GM12878 (cell line): ENCODE measurements at regions of chr12 and their contacts with region 1.

Region 1: DNA sequence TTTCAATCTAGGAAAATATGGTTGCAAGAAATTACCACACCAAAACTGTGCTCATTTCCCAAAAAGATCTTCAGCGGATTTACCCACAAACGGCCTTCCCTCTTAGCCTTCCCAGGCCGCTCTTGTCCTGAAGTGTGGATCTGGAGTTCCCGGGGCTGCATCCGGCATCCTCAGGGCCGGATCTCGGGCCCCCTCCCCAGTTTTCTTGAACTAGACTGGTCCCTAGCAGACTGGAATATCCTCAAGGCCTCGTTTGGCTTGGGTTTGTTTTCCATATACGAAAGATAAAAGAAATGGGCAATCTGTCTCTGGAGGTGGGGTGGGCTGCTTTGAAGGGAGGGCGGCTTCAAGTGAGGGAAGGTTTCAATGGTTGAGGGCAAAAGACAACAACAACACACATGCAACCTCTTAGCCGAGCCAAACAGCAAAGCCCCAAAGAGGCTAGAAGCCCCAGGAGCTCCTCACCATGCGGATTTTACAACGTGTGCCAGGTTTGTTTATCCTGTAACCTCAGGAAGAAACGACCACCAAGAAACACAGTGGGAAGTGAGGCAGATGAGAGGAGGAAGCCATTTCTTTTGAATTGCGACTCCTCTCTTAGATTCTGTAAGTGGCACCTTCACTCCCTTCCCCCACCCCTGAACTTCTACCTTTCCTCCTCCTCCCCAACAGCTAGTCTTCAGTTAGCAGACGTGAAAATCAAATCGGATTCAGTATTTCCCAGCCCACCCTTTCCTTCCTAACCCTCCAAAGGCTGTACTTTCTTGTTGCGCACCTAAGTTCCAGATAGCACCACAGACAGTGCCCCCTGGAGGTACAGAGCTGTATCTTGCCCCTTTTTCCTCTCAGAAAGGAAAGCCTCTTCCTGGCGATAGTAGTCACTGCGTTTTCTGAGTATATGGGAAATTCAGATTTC is 2.6 kb downstream of the MYF6 start:
- DNase-seq: no peak
- ATAC-seq: peak; percentile 91
- H3K4me3 ChIP-seq: no peak overlapping the region
- H3K27ac ChIP-seq: no peak overlapping the region
- H3K4me1 ChIP-seq: no peaks in the 10 kb centered on the region
- H3K27me3 ChIP-seq: peaks cover 9 to 20% of the 10 kb centered on the region in 2 experiments
- CTCF ChIP-seq: peak; percentile 54 to 80 (median 59); a peak in 5 of 6 replicates
- EP300 ChIP-seq: no peak
- POLR2A ChIP-seq: no peak
- RAD21 ChIP-seq: peak; percentile 49

Region 2: DNA sequence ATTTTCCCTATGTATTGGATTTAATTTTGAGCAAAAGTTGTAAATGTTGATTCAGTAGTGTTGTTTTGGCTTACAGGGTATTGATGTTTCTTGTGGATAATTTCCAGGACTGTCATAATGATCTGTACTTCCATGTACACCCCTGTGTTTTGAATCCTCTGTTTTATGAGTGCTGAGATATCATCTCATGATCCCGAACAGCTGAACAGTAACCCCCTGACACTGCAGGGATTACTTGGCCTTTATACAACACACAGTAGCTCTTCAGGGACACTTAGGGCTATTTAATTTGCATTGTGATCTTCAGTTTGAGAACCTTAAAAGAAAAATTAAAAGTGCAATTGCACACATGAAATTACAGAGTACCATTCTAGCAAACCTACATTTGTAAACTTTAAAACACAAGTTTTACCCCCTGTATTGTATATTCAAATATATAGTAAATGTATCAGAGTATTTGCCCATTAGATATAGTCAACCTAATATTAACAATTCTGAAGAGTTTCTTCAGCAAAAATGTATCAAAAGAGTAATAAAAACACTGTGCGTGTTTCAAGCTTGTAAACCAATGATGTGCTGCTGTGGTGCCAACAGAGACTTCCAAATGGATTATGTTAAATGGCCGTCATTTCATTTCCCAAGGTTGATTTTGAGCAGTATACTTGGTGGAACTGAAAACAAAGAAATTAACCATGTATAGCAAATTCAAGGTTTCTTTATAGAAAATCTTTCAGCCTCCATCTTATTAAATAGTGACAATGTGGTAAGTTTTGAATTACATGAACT is 30.5 kb before region 1 on chr12:
- CTCF ChIA-PET with region 1: interaction called, 10 read pairs
- POLR2A ChIA-PET with region 1: no interaction called
- RAD21 ChIA-PET with region 1: no interaction called
- SMC1A ChIA-PET with region 1: no interaction called
- in situ Hi-C with region 1: no loop called
- intact Hi-C with region 1: no loop called
- DNase-seq: no peak
- ATAC-seq: no peak
- H3K4me3 ChIP-seq: no peak overlapping the region
- H3K27ac ChIP-seq: no peak overlapping the region
- H3K4me1 ChIP-seq: no peaks in the 10 kb centered on the region
- H3K27me3 ChIP-seq: no peaks in the 10 kb centered on the region
- CTCF ChIP-seq: no peak
- EP300 ChIP-seq: no peak
- POLR2A ChIP-seq: no peak
- RAD21 ChIP-seq: no peak